Heart right ventricle (tissue), 16 donors: ENCODE measurements at regions of chr3 and their contacts with region 1.

Region 1: DNA sequence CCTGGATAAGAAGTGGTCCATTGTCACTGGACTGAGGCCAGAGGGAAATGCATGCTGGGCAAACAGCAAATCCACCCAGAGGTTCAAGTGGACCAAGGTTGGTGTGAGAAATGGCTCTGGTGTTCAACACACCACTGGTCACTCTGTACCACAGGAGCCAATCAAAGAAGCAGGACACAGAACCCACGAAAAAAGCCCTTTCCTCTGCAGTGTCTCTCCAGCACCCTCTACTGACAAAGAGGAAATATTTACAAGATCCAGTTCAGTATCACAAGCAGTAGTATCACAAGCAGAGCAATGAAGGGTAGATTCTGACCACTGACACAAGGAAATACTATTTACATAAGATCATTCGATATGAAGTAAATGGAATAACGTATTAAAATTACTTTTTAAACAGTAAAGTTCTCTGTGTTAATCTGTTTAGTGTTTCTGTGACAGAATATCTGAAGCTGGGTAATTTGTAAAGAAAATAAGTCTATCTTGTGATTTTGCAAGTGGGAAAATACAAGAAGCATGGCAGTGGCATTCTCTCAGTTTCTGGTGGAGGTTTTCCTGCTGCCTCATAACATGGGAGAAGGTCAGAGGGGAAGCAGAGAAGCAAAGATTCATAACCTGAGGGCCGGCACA is 390.7 kb downstream of the EFHB start:
- DNase-seq: no peak
- ATAC-seq: peak in 6 of 8 donors; percentile 20 to 70 (median 49)
- H3K4me3 ChIP-seq: no peak overlapping the region
- H3K27ac ChIP-seq: no peak overlapping the region
- H3K4me1 ChIP-seq: no peaks in the 10 kb centered on the region
- H3K27me3 ChIP-seq: no peaks in the 10 kb centered on the region
- CTCF ChIP-seq: peak in 8 of 9 donors; percentile 16 to 73 (median 58)

Region 2: GRCh38 chr3:19065027-19065426 is 478.3 kb before region 1 on chr3:
- intact Hi-C with region 1: loop called in 1 of 10 experiments (anchors 10 kb)
- DNase-seq: no peak
- ATAC-seq: no peak
- H3K4me3 ChIP-seq: no peak overlapping the region
- H3K27ac ChIP-seq: no peak overlapping the region
- H3K4me1 ChIP-seq: no peaks in the 10 kb centered on the region
- H3K27me3 ChIP-seq: no peaks in the 10 kb centered on the region
- CTCF ChIP-seq: peak in 7 of 9 donors; percentile 38 to 62 (median 44)

Region 3: DNA sequence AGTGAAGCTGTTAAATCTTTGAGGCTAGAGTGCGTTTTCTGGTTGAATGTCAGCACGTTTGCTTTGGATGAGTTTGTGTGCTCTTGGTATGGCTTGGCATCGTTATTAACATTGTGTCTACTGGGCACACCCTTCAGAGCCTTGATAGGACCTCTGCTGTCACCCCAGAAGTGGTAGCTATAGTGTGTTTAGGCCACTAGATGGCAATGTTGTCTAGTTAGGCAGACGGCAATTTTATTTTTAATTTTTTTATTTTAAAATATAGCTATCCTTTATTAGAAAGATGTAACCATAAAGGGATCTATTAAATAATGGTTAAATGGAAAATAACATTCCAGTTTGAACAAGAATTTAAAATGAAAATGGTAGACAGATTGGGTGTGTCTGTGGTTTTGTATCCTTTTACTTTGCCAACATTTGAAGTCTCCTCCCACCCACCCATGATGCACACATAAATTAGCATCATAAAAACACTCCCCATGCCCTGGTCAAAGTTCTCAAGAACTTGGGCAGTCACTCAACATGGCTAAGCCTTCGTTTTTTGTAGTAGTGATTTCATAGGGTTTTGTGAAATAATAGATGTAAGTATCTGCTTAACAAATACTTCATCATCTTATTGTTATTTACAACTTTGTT is 194.3 kb before region 1 on chr3:
- intact Hi-C with region 1: loop called (anchors 2 to 10 kb)
- DNase-seq: no peak
- ATAC-seq: peak in 1 of 8 donors; percentile 51
- H3K4me3 ChIP-seq: no peak overlapping the region
- H3K27ac ChIP-seq: no peak overlapping the region
- H3K4me1 ChIP-seq: peaks cover 0 to 10% (median 0%) of the 10 kb centered on the region in 9 donors
- H3K27me3 ChIP-seq: no peaks in the 10 kb centered on the region
- CTCF ChIP-seq: peak; percentile 54 to 84 (median 78)

Region 4: GRCh38 chr3:19598870-19599269 is 55.5 kb after region 1 on chr3:
- intact Hi-C with region 1: no loop called
- DNase-seq: no peak
- ATAC-seq: no peak
- H3K4me3 ChIP-seq: no peak overlapping the region
- H3K27ac ChIP-seq: no peak overlapping the region
- H3K4me1 ChIP-seq: no peaks in the 10 kb centered on the region
- H3K27me3 ChIP-seq: no peaks in the 10 kb centered on the region
- CTCF ChIP-seq: no peak